ENCODE measurements at regions of chr5 and their contacts with region 1.

Region 1: DNA sequence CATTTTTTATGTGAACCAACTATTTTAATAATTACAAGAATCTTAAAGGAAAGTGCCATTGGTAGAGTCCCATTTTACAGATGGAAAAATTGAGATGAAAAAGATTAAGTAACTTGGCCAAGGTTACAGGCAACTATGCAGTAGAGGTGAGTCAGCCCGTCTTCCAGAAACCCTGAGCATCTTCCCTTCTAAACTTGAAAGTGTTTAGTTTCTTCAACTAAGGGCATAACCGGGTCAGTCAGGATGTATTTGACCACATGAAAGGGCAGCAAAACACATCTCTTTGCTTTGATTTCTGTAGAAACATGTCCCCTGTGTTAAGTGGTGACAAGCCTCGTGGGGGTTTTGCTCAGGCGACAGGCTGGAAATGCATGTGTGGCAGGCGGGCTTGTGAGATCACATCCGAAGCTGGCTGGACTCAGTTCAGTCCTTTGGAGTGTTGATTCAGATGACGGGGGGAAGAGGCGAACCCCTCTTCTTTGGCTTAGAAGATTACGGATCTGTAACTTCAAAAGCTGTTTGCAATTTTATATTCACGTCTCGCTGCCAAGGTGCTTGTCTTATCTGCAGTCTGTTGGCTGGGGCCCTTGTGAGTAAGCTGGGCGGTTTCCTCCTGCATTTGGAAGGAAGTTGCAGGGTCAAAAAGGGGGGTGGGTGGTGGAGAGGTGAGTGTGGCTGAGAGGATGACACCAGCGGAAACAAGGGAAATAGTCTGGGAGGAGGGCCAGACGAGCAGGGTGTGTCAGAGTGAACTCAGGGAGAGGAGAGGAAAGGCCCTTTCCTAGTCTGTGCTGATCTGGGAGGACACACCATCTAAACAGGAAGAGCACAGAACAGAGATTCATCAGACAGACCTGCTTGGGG is 78.9 kb upstream of the RPS23 start:
- DNase-seq: peak; percentile 26 to 87 (median 83)
- ATAC-seq: peak; percentile 90
- H3K4me3 ChIP-seq: peak overlapping the region; percentile 15
- H3K4me3 Mint-ChIP-seq: peak overlapping the region; percentile 74 to 90 (median 82)
- H3K27ac ChIP-seq: peak overlapping the region; percentile 60
- H3K27ac Mint-ChIP-seq: peak overlapping the region; percentile 87 to 98 (median 97)
- H3K4me1 ChIP-seq: peaks cover 17 to 19% of the 10 kb centered on the region in 2 donors
- H3K4me1 Mint-ChIP-seq: peaks cover 19 to 78% (median 23%) of the 10 kb centered on the region in 7 donors
- H3K27me3 ChIP-seq: no peaks in the 10 kb centered on the region
- H3K27me3 Mint-ChIP-seq: no peaks in the 10 kb centered on the region

Region 2: DNA sequence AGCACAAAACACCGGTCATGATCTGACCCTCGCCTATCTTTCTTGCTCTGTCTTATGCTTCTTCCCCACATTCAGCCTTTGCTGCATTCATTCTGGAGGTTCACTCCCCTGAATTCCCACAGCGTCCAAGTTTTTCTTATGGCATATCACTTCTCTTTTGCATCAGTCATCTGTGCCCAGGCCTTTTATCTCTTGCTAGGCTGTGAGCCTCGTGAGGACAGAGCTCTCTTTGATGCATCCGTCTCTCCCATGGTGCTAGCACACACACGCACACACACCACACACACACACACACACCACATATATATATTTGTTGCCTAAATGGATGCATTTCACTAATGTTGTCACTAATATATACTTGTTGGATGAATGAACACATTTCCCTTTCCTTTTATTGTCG is 431.1 kb before region 1 on chr5:
- CTCF ChIA-PET with region 1: no interaction called
- POLR2A ChIA-PET with region 1: no interaction called
- intact Hi-C with region 1: no loop called
- DNase-seq: no peak
- ATAC-seq: no peak
- H3K4me3 ChIP-seq: no peak overlapping the region
- H3K4me3 Mint-ChIP-seq: no peak overlapping the region
- H3K27ac ChIP-seq: no peak overlapping the region
- H3K27ac Mint-ChIP-seq: no peak overlapping the region
- H3K4me1 ChIP-seq: no peaks in the 10 kb centered on the region
- H3K4me1 Mint-ChIP-seq: no peaks in the 10 kb centered on the region
- H3K27me3 ChIP-seq: no peaks in the 10 kb centered on the region
- H3K27me3 Mint-ChIP-seq: peaks cover 0 to 6% (median 0%) of the 10 kb centered on the region in 5 donors

Region 3: GRCh38 chr5:82265047-82265446 is 92.0 kb before region 1 on chr5:
- CTCF ChIA-PET with region 1: no interaction called
- POLR2A ChIA-PET with region 1: no interaction called
- intact Hi-C with region 1: no loop called
- DNase-seq: no peak
- ATAC-seq: no peak
- H3K4me3 ChIP-seq: no peak overlapping the region
- H3K4me3 Mint-ChIP-seq: no peak overlapping the region
- H3K27ac ChIP-seq: no peak overlapping the region
- H3K27ac Mint-ChIP-seq: no peak overlapping the region
- H3K4me1 ChIP-seq: no peaks in the 10 kb centered on the region
- H3K4me1 Mint-ChIP-seq: no peaks in the 10 kb centered on the region
- H3K27me3 ChIP-seq: no peaks in the 10 kb centered on the region
- H3K27me3 Mint-ChIP-seq: no peaks in the 10 kb centered on the region

Region 4: DNA sequence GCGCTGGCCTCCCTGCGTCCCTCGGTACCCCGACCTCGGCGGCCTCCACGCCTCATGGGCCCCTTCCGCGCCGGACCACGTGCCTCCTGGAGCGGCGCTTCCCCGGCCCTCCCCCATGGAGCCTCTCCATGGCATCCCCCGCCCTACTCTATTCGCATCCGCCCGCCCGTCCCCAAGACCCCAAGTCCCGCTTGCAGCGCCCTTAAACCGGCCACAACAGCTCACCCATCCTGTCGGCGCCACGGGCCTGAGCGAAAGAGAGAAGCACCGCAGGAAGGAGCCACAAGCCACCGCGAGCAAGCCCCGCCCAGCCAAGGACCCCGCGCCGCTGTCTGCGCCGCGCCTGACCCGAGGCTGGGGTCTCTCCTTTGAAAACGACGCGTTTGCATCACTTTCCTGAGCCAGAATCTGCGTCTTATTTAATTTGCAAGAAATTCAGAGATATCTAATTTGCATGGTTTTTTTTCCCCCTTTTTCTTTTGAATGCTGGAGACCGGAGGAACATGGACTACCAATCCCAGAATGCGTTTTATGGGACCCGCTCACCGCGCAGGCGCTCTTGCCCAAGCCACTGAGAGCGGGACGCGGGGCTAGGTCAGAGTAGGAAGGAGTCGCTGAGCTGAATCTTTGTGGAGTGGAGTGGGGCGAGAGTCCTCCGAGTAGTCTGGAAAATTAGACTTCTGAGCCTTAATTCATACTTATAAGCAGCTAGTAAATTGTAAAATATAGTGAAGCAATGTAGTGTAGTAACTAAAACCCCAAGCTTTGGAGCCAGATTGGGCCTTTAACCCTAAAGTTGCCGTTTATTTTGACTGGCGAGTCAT is 78.7 kb before region 1 on chr5 and contains the start of gene RPS23:
- CTCF ChIA-PET with region 1: no interaction called
- POLR2A ChIA-PET with region 1: no interaction called
- intact Hi-C with region 1: loop called (anchors 1 kb)
- DNase-seq: peak; percentile 78 to 90 (median 85)
- ATAC-seq: peak; percentile 96
- H3K4me3 ChIP-seq: peak within 1 kb of the TSS; percentile 72
- H3K4me3 Mint-ChIP-seq: peak within 1 kb of the TSS; percentile 87 to 98 (median 94)
- H3K27ac ChIP-seq: peak within 1 kb of the TSS; percentile 80
- H3K27ac Mint-ChIP-seq: peak within 1 kb of the TSS; percentile 94 to 99 (median 96)
- H3K4me1 ChIP-seq: peaks cover 12 to 16% of the 10 kb centered on the region in 2 donors
- H3K4me1 Mint-ChIP-seq: peaks cover 13 to 65% (median 39%) of the 10 kb centered on the region in 7 donors
- H3K27me3 ChIP-seq: no peaks in the 10 kb centered on the region
- H3K27me3 Mint-ChIP-seq: no peaks in the 10 kb centered on the region
- total RNA-seq, gene RPS23: 2,233 to 4,335 (median 3,874) TPM

Region 5: DNA sequence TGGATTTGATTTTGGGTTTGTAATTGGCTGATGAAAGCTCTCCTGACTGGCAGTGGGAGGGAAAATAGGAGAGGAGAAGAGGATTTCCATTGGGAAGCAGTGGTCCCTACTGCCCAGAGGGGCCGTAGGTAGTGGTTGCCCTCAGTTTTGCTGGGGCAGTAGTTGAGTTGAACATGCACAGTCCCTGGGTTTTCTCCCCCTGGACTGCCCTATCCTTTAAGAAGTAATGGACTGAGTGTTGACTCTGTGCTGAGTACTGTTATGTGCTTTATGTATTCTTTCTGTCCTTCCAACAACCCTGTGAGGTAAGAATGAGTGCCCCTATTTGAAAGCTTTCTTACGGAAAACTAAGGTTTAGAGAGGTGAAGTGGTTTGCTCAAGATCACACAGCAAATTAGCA is 32.3 kb after region 1 on chr5:
- CTCF ChIA-PET with region 1: no interaction called
- POLR2A ChIA-PET with region 1: no interaction called
- intact Hi-C with region 1: loop called in 1 of 2 experiments (anchors 1 kb)
- DNase-seq: no peak
- ATAC-seq: no peak
- H3K4me3 ChIP-seq: no peak overlapping the region
- H3K4me3 Mint-ChIP-seq: peak overlapping the region in 1 of 10 donors; percentile 64
- H3K27ac ChIP-seq: no peak overlapping the region
- H3K27ac Mint-ChIP-seq: peak overlapping the region in 1 of 9 donors; percentile 86
- H3K4me1 ChIP-seq: no peaks in the 10 kb centered on the region
- H3K4me1 Mint-ChIP-seq: peaks cover 0 to 18% (median 0%) of the 10 kb centered on the region in 7 donors
- H3K27me3 ChIP-seq: no peaks in the 10 kb centered on the region
- H3K27me3 Mint-ChIP-seq: peaks cover 0 to 18% (median 11%) of the 10 kb centered on the region in 5 donors

Region 6: DNA sequence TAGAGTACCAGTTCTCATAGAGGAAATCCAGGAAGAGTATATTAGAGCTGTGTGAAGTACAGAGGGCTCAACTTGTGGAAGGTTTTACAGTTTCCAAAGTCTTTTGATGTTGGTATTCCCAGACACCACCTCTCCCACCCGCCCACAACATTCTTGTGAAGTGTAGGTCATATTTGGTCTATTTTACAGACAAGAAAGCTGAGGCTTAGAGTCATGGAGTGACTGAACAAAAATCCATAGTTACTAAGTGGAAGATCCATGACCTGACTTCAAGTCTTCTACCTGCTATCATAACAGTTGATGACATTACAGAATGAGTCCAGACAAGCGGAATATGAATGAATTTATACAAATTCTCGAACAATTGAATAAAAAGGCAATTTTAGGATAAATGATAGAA is 108.2 kb after region 1 on chr5:
- CTCF ChIA-PET with region 1: no interaction called
- POLR2A ChIA-PET with region 1: no interaction called
- intact Hi-C with region 1: loop called in 1 of 2 experiments (anchors 2 kb)
- DNase-seq: no peak
- ATAC-seq: no peak
- H3K4me3 ChIP-seq: no peak overlapping the region
- H3K4me3 Mint-ChIP-seq: no peak overlapping the region
- H3K27ac ChIP-seq: no peak overlapping the region
- H3K27ac Mint-ChIP-seq: no peak overlapping the region
- H3K4me1 ChIP-seq: no peaks in the 10 kb centered on the region
- H3K4me1 Mint-ChIP-seq: no peaks in the 10 kb centered on the region
- H3K27me3 ChIP-seq: no peaks in the 10 kb centered on the region
- H3K27me3 Mint-ChIP-seq: peaks cover 0 to 13% (median 5%) of the 10 kb centered on the region in 5 donors

Region 7: DNA sequence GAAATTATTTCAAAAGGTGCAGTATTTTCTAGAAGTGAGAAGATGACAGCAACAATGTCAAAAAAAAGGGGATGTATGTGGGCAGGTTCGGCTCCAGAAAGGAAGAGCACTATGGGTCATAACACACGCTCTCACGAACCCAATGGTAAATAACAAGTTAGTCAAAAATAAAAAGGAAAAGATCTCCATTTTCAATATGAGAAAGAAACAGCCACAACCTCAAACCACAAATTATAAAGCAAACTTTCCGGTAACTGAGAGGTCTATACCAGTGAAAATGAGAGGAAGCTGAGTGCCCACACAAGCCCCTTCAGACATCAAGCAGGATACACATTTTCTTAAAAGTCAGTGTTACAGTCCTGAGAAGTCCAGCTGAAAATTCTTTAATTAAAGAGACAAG is 319.6 kb after region 1 on chr5:
- CTCF ChIA-PET with region 1: no interaction called
- POLR2A ChIA-PET with region 1: no interaction called
- intact Hi-C with region 1: loop called in 1 of 2 experiments (anchors 2 kb)
- DNase-seq: peak in 1 of 9 donors; percentile 0
- ATAC-seq: no peak
- H3K4me3 ChIP-seq: no peak overlapping the region
- H3K4me3 Mint-ChIP-seq: peak overlapping the region in 9 of 10 donors; percentile 8 to 65 (median 28)
- H3K27ac ChIP-seq: no peak overlapping the region
- H3K27ac Mint-ChIP-seq: peak overlapping the region in 4 of 9 donors; percentile 12 to 86 (median 44)
- H3K4me1 ChIP-seq: no peaks in the 10 kb centered on the region
- H3K4me1 Mint-ChIP-seq: peaks cover 9 to 29% (median 13%) of the 10 kb centered on the region in 7 donors
- H3K27me3 ChIP-seq: no peaks in the 10 kb centered on the region
- H3K27me3 Mint-ChIP-seq: peaks cover 0 to 10% (median 7%) of the 10 kb centered on the region in 5 donors

Region 8: GRCh38 chr5:83473346-83474163 is 1116.5 kb after region 1 on chr5:
- CTCF ChIA-PET with region 1: no interaction called
- POLR2A ChIA-PET with region 1: no interaction called
- intact Hi-C with region 1: loop called in 1 of 2 experiments (anchors 2 kb)
- DNase-seq: peak in 8 of 9 donors; percentile 16 to 60 (median 26)
- ATAC-seq: peak; percentile 66
- H3K4me3 ChIP-seq: peak overlapping the region; percentile 24
- H3K4me3 Mint-ChIP-seq: peak overlapping the region; percentile 78 to 90 (median 84)
- H3K27ac ChIP-seq: no peak overlapping the region
- H3K27ac Mint-ChIP-seq: peak overlapping the region in 1 of 9 donors; percentile 38
- H3K4me1 ChIP-seq: peaks cover 4 to 23% of the 10 kb centered on the region in 2 donors
- H3K4me1 Mint-ChIP-seq: peaks cover 17 to 42% (median 38%) of the 10 kb centered on the region in 7 donors
- H3K27me3 ChIP-seq: peaks cover 0 to 15% of the 10 kb centered on the region in 2 donors
- H3K27me3 Mint-ChIP-seq: peaks cover 73 to 86% (median 80%) of the 10 kb centered on the region in 5 donors